Cardiac septum (tissue), 1 donor: ENCODE measurements at regions of chr9 and their contacts with region 1.

Region 1: DNA sequence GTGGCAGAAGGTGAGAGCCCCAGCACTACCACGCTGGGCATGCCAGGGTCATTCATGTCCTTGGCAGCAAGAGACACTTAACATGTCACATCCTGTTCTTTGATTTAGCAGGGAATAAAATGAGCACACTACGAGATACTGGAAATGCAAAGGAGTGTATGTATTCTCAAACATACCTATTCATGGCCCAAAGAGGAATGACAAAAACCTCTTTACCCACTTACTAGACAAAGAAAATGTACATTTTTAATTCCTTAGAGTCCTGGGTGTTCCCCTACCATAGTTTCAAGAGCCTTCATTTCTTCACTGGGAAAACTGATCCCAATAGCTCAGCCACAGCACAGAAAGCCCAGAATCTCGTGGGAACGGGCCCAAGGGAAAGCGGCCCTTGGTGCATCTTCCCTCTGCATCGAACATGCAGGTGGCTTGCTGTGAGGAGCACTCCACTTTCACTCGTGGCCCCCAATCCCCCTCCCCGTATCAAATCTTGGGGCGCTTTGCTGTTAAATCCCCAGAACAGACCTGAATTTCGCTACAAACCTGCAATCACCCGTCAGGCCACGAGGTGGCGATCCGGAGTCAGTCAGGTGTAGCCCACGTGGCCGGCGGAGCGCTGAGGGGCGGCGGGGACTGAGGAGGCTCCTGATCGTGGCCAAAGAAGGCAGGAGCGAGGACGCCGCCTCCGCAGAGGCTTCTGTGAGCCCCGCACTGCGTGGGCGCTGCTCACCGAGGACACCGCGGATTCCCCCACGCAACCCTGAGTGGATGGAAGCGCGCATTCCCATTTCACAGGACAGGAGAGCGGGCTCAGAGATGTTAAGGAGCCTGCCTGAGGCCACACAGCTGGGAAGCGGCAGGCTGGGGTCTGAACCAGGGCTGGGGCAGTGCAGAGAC is 91.4 kb downstream of the LMX1B start:
- DNase-seq: no peak

Region 2: GRCh38 chr9:126781186-126782052 is 76.3 kb after region 1 on chr9:
- intact Hi-C with region 1: loop called (anchors 1 kb)
- DNase-seq: peak; percentile 85